Spleen (tissue), 13 donors: ENCODE measurements at regions of chr10 and their contacts with region 1.

Region 1: DNA sequence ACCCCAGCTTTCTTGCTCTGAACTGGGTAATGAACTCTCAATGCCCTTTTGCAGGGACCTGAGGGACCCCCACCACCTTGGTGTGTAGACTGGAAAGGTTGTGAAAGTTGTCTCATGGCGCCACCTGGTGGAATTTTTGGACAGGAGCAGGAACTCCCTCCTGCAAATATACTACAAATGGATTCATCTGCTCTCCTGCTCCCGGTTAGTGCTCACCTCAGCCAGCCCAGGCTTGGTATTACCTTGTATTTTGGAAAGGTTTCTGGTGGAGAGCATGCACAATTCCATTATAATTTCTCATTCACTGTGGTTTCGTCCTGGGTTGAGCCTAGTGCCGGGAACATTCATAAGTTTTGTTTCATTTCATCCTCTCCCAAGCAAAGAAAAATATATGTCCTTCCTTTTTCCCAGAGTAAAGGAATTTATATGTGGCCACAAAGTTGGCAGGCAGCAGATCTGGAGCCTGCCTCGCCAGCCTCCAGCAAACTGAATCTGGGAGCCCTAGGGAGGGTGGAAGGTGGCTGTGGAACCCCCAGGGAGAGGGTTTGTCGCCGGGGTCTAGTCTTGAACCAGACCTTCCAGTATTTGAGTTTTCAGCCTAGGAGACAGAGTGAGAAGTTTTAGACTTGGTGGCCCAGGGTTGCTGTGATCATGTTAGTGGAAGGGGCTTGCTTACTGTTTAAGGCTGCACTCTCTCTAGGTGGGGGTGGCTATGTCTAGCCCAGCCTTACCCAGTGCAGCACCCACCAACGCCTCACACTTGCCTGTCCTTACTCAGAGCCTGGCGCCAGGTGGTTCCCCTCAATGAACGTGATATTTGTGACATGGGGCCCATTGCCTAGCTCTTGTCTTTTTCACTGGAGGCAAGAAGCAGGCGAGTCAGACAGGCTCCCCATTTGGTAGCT is 9.5 kb downstream of the FAM241B start:
- DNase-seq: peak; percentile 79
- H3K4me3 ChIP-seq: no peak overlapping the region
- H3K27ac ChIP-seq: no peak overlapping the region
- H3K4me1 ChIP-seq: peaks cover 0 to 3% (median 0%) of the 10 kb centered on the region in 6 donors
- H3K27me3 ChIP-seq: peaks cover 0 to 45% (median 0%) of the 10 kb centered on the region in 7 donors
- CTCF ChIP-seq: peak; percentile 34 to 87 (median 82)
- POLR2A ChIP-seq: no peak

Region 2: DNA sequence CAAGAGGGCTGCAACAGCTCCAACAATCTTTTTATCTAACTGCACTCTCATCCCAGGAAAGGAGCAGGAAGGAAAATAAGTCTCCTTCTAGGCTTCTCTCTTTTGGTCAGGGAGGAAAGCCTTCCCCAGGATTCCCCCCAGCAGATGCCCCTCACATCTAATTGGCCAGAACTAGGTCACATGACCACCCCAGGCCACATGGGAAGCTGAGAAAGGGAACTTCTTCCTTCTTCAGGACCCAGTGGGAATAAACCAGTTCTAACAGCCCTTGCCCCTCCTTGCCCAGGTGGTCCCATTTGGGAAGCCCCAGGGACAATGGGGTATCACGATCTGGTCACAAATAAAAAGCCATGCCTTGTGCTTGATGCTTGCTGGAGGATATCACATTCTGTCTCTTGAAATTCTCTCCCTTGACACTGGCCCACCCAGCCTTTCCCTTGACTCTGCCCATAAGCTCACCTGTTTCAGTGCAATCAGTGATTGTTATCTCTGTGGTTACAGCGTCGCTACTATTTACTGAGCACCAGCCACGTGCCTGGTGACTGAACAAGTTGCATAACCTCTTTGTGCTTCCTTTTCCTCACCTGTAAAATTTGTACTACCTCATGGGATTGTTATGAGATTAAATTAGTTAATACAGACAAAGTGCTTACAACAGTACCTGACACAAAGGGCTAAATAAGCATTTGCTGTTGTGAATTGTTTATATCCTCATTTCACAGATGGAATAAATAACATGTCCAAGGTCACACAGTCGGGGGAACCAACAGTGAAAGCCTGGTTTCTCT is 213.8 kb before region 1 on chr10:
- intact Hi-C with region 1: loop called (anchors 10 kb)
- DNase-seq: peak; percentile 35
- H3K4me3 ChIP-seq: no peak overlapping the region
- H3K27ac ChIP-seq: peak overlapping the region in 5 of 8 donors; percentile 5 to 68 (median 46)
- H3K4me1 ChIP-seq: peaks cover 0 to 27% (median 16%) of the 10 kb centered on the region in 6 donors
- H3K27me3 ChIP-seq: no peaks in the 10 kb centered on the region
- CTCF ChIP-seq: no peak
- POLR2A ChIP-seq: no peak

Region 3: GRCh38 chr10:69515699-69516259 is 123.8 kb before region 1 on chr10:
- intact Hi-C with region 1: loop called (anchors 2 kb)
- DNase-seq: peak; percentile 90
- H3K4me3 ChIP-seq: no peak overlapping the region
- H3K27ac ChIP-seq: no peak overlapping the region
- H3K4me1 ChIP-seq: no peaks in the 10 kb centered on the region
- H3K27me3 ChIP-seq: no peaks in the 10 kb centered on the region
- CTCF ChIP-seq: peak; percentile 46 to 82 (median 73)
- POLR2A ChIP-seq: no peak

Region 4: DNA sequence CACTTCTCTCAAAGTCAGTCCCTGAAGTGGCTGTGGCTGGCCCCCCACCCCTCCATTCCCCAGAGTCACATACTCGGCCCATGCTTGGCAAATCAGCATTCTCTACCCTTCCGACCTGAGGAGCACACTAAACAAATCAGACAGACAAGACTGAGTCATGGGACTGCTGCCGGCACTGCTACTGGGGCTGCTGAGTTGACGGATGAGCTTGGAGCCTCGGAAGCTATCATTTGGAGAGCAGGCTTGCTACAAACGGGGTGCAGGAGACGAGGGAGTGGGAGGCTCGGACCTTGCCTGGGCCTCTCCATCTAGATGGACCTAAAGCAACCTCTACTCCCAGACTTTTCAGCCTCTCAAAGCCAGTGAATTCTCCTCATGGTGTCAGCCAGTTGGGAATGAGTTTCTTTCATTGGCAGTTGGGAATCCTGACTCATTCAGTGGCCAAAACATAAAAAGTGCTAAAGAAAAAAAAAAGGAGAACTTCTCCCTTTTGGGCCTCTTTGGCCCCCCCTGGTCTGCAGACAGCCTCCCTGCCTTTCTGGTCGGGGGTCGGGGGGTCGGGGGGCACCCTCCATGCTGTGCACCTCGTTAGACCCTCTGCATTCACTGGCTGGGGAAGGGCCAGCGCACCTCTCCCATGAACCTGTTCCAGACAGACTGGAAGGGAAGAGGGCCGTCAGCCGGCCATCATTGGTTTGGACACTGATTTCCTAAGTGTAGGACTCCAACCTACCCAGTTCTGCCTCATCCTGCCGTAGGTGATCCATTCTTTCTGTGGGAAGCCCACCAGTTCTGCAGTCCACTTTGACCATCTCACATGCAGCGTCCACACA is 109.9 kb after region 1 on chr10:
- intact Hi-C with region 1: no loop called
- DNase-seq: no peak
- H3K4me3 ChIP-seq: no peak overlapping the region
- H3K27ac ChIP-seq: no peak overlapping the region
- H3K4me1 ChIP-seq: no peaks in the 10 kb centered on the region
- H3K27me3 ChIP-seq: peaks cover 0 to 21% (median 0%) of the 10 kb centered on the region in 7 donors
- CTCF ChIP-seq: no peak
- POLR2A ChIP-seq: no peak

Region 5: GRCh38 chr10:69914398-69915214 is 275.1 kb after region 1 on chr10:
- intact Hi-C with region 1: loop called (anchors 10 kb)
- DNase-seq: peak; percentile 85
- H3K4me3 ChIP-seq: no peak overlapping the region
- H3K27ac ChIP-seq: no peak overlapping the region
- H3K4me1 ChIP-seq: peaks cover 4 to 39% (median 26%) of the 10 kb centered on the region in 6 donors
- H3K27me3 ChIP-seq: peaks cover 0 to 48% (median 0%) of the 10 kb centered on the region in 7 donors
- CTCF ChIP-seq: peak; percentile 56 to 93 (median 85)
- POLR2A ChIP-seq: no peak